Mammary epithelial cell (primary cell): ENCODE measurements at regions of chr18 and their contacts with region 1.

Region 1: GRCh38 chr18:80179857-80180551 is 67.3 kb downstream of the PARD6G start:
- DNase-seq: peak; percentile 84
- H3K4me3 ChIP-seq: peak overlapping the region in 2 of 3 experiments; percentile 8 to 9
- H3K27ac ChIP-seq: peak overlapping the region; percentile 68
- H3K4me1 ChIP-seq: peaks cover 47% of the 10 kb centered on the region
- H3K27me3 ChIP-seq: no peaks in the 10 kb centered on the region
- CTCF ChIP-seq: peak; percentile 28 to 53

Region 2: DNA sequence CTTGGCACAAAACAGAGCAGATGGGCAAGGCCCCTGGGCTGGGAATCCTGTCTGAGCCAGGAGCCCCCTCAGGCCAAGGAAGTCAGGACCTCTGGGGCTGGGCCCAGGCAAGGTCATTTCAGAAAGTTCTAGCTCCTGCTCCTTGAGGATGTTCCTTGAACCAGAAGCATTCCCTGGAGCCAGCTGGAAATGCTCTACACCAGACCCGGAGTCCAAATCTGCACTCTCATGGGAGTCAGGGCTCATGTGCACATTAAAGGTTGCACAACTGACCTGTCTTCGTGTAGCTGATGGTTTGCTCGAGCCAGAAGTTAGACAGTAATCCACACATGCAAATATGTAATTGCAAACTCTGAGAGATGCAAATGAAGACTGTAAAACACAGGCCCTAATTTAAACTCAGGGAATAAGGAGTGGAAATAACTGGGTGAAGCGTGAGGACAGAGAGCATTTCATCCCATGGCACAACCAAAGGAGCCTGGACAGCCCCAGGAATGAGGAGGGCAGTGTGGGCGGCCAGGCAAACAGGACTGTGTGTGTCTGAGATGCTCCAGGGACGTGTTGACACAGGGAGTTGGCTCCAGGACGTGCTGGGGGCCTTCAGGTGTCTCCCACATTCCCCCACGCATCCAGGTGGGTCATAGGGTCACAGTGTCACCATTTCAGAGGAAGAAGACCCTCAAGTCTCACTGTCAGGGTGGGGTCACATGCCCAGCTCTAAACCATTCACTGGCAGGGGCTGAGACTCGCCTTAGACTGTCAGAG is 49.5 kb after region 1 on chr18:
- CTCF ChIA-PET with region 1: no interaction called
- dilution Hi-C with region 1: loop called (anchors 5 kb)
- in situ Hi-C with region 1: no loop called
- intact Hi-C with region 1: no loop called
- DNase-seq: no peak
- H3K4me3 ChIP-seq: no peak overlapping the region
- H3K27ac ChIP-seq: no peak overlapping the region
- H3K4me1 ChIP-seq: peaks cover 34% of the 10 kb centered on the region
- H3K27me3 ChIP-seq: no peaks in the 10 kb centered on the region
- CTCF ChIP-seq: no peak

Region 3: GRCh38 chr18:80247403-80247916 is 67.5 kb after region 1 on chr18 and contains the start of gene PARD6G:
- CTCF ChIA-PET with region 1: no interaction called
- dilution Hi-C with region 1: no loop called
- in situ Hi-C with region 1: no loop called
- intact Hi-C with region 1: loop called (anchors 1 kb)
- DNase-seq: peak; percentile 59
- H3K4me3 ChIP-seq: peak within 1 kb of the TSS; percentile 73 to 79 (median 73)
- H3K27ac ChIP-seq: peak within 1 kb of the TSS; percentile 58
- H3K4me1 ChIP-seq: peaks cover 53% of the 10 kb centered on the region
- H3K27me3 ChIP-seq: no peaks in the 10 kb centered on the region
- CTCF ChIP-seq: no peak
- total RNA-seq, gene PARD6G: 34.9 to 35.7 TPM